Vagina (tissue), 2 donors: ENCODE measurements at regions of chr2 and their contacts with region 1.

Region 1: DNA sequence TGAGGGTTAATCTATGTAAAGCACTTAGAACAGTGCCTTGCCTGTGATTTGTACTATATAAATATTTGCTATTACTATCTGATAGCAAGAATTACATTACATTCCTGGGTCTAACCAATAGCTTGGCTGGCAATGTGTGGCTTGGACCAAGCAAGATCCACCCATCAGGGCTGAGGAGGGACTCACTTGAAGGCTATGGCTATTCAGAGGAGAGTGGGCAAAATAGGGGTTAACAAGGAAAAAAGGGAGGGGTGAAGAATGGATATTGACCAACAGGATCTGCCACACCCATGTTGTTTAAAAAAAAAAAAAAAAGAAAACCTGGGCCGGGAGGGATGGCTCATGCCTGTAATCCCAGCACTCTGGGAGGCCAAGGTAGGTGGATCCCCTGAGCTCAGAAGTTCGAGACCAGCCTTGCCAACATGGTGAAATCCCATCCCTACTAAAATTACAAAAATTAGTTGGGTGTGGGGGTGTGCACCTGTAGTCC is 20.0 kb upstream of the TMBIM1 start:
- DNase-seq: no peak
- H3K4me3 ChIP-seq: no peak overlapping the region
- H3K27ac ChIP-seq: no peak overlapping the region
- H3K4me1 ChIP-seq: no peaks in the 10 kb centered on the region
- H3K27me3 ChIP-seq: no peaks in the 10 kb centered on the region
- CTCF ChIP-seq: no peak
- POLR2A ChIP-seq: no peak

Region 2: GRCh38 chr2:217471319-217471718 is 841.0 kb before region 1 on chr2:
- intact Hi-C with region 1: loop called (anchors 5 kb)
- DNase-seq: no peak
- H3K4me3 ChIP-seq: no peak overlapping the region
- H3K27ac ChIP-seq: no peak overlapping the region
- H3K4me1 ChIP-seq: peaks cover 15% of the 10 kb centered on the region
- H3K27me3 ChIP-seq: no peaks in the 10 kb centered on the region
- CTCF ChIP-seq: no peak
- POLR2A ChIP-seq: no peak

Region 3: DNA sequence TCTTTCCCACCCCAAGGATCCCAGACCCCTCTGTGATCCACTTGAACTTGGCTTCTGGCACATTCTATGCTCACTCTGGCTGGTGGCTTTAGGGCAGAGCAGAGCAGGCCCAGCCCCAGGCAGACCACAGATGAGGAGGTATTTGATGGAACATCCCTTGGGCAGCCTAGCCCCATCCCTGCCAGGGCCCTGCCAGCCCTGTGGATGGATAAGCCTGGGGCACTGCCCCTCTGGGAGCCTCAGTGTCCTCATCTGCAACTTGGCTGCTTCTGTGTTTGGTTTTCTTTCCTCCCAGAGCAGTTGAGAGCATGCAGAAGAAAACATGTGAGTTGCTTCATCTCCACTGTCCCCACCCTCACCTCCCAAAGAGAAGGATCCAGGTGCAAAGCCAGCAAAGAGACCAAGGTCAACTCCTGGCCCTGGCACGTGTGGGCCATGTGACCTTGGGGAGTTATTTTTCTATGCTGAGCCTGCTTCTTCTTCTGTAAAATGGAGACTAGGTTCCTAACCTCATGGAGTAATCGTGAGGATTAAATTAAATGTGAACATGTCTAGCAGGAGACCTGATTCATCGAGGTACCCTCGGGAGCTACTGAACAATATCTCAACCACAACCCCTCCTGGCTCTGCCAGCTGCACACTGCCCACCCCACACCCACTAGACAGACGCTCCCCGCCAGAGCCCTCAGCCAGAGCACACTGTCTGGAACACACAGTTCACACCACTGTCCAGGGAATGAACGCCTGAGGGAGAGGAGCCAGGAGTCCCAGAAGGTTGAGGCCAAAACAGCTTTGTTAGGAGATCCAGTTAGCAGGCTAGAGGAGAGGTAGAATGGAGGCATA is 294.9 kb before region 1 on chr2:
- intact Hi-C with region 1: no loop called
- DNase-seq: no peak
- H3K4me3 ChIP-seq: no peak overlapping the region
- H3K27ac ChIP-seq: no peak overlapping the region
- H3K4me1 ChIP-seq: peaks cover 14% of the 10 kb centered on the region
- H3K27me3 ChIP-seq: no peaks in the 10 kb centered on the region
- CTCF ChIP-seq: no peak
- POLR2A ChIP-seq: no peak

Region 4: DNA sequence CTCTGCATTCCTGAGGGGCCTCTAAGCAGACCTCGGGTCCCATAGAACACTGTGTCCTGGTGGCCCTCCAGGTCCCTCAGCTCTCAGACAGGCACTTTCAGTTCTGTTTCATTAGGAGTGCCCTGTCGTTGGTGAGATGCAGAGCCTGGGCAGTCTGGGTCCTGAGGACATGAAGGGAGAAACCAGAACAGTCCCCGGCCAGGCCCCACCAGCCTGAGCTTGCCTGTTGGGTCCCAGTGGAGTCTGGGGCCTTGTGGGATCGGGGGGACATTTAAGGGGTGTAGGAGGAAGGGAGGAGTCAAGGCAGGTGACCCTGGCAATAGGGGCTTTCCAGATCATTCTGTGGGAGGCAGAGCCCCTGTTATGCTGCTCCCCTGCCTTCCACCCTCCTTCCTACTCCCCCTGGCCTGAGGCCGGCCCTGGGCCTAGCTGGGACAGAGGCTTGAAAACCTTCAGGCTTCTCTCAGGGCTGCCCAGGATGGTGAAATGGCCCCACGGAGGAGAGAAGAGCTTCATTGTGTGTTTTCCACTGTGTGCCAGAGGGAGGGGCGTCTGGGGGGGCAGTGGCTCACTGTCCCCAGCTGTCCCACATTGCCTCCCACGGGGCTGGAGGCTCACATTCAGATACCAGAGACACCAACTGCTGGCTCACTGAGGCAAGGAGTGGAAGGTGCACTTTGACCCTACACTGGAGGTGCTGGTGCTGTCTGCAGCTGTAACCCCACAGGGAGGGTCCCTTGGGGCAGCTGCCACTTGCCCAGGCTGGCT is 17.7 kb after region 1 on chr2:
- intact Hi-C with region 1: no loop called
- DNase-seq: no peak
- H3K4me3 ChIP-seq: no peak overlapping the region
- H3K27ac ChIP-seq: no peak overlapping the region
- H3K4me1 ChIP-seq: no peaks in the 10 kb centered on the region
- H3K27me3 ChIP-seq: no peaks in the 10 kb centered on the region
- CTCF ChIP-seq: no peak
- POLR2A ChIP-seq: no peak

Region 5: GRCh38 chr2:218429571-218430301 is 117.4 kb after region 1 on chr2:
- intact Hi-C with region 1: no loop called
- DNase-seq: no peak
- H3K4me3 ChIP-seq: no peak overlapping the region
- H3K27ac ChIP-seq: no peak overlapping the region
- H3K4me1 ChIP-seq: no peaks in the 10 kb centered on the region
- H3K27me3 ChIP-seq: no peaks in the 10 kb centered on the region
- CTCF ChIP-seq: no peak
- POLR2A ChIP-seq: no peak

Region 6: DNA sequence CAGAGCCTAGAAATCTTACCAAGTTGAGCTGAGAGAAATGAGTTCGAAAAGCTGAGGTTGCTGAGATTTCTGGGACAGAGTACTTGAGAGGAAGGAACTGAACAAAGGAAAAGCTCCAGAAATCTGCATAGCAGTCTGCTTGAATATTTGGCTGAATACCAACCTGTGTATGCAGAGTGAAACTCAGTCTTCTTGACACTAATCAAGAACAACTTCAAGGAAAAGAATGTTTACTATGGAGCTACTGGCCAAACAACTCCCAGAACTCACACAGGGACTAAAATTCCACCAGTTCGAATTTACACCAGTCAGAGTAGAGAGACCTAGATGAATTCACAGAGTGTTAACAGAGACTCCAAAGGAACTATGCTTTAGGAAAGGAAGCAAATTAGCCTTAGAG is 189.4 kb after region 1 on chr2:
- intact Hi-C with region 1: no loop called
- DNase-seq: no peak
- H3K4me3 ChIP-seq: no peak overlapping the region
- H3K27ac ChIP-seq: no peak overlapping the region
- H3K4me1 ChIP-seq: no peaks in the 10 kb centered on the region
- H3K27me3 ChIP-seq: no peaks in the 10 kb centered on the region
- CTCF ChIP-seq: no peak
- POLR2A ChIP-seq: no peak